Activated CD4-positive, alpha-beta T cell treated with anti-CD3 and anti-CD28 coated beads for 36 hours (primary cell): ENCODE measurements at regions of chr12 and their contacts with region 1.

Region 1: DNA sequence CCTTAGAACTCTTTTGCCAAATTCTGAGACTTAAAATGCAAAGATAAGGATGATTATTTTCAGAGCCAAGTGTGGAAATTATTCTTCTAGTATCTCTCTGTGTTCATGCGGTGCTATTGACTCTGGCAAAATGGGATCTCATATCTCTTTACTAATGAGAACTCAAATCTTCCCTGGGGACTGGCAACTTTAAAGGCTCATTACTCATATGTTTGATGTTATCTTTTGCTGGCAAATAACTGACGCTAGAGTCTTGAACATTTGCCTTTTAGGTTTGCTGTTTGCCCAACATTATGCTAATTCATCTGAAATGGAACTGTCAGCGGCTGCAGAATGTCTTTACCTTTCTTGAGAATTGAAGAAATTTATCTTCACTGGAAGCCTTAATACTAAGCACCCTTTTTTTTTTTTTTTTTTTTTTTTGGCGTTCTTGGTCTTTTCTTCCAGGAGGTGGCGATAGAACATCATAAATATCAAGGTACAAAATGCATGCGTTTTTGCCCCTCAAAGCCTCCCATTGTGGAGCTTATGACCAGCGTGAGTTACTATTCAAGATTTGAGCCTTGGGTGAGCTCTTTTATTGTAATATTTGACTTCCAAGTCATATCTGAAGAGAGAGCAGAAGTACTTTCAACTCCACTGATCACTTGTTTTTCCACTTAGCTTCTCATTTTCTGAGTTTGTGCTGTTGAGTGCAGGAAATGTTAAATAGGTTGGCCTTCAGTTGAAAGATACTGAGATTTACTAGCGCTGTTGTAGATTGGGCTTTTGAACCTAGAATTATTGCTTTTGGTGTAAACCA is 86.6 kb downstream of the CAND1 start:
- DNase-seq: peak; percentile 22
- ATAC-seq: peak; percentile 65
- H3K4me3 Mint-ChIP-seq: no peak overlapping the region
- H3K27ac Mint-ChIP-seq: no peak overlapping the region
- H3K4me1 Mint-ChIP-seq: peaks cover 29% of the 10 kb centered on the region
- H3K27me3 Mint-ChIP-seq: no peaks in the 10 kb centered on the region

Region 2: GRCh38 chr12:67241482-67241881 is 114.3 kb before region 1 on chr12:
- CTCF ChIA-PET with region 1: no interaction called
- POLR2A ChIA-PET with region 1: no interaction called
- intact Hi-C with region 1: no loop called
- DNase-seq: no peak
- ATAC-seq: no peak
- H3K4me3 Mint-ChIP-seq: no peak overlapping the region
- H3K27ac Mint-ChIP-seq: no peak overlapping the region
- H3K4me1 Mint-ChIP-seq: no peaks in the 10 kb centered on the region
- H3K27me3 Mint-ChIP-seq: peaks cover 2% of the 10 kb centered on the region

Region 3: DNA sequence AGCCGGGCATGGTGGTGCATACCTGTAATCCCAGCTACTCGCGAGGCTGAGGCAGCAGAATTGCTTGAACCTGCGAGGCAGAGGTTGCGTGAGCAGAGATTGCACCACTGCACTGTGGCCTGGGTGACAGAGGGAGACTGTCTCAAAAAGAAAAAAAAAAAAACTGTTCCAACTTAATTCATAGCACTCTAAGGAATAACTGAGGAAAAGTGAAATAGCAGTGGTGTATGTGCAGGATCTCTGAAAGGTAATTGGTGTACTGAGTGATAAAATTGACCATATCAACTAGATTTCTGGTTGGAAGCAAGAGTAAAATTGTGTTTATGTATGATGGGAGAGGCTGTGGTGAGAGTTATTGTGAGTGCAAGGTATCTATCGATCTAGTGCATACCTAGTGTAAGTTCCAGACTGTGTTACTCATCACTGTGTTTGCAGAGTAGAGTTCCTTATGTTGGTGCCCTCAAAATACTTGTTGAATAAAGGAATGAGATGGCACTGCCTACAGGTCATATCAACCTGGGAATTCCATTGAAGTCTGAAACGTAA is 80.3 kb before region 1 on chr12:
- CTCF ChIA-PET with region 1: no interaction called
- POLR2A ChIA-PET with region 1: no interaction called
- intact Hi-C with region 1: no loop called
- DNase-seq: no peak
- ATAC-seq: peak; percentile 53
- H3K4me3 Mint-ChIP-seq: no peak overlapping the region
- H3K27ac Mint-ChIP-seq: no peak overlapping the region
- H3K4me1 Mint-ChIP-seq: peaks cover 80% of the 10 kb centered on the region
- H3K27me3 Mint-ChIP-seq: no peaks in the 10 kb centered on the region

Region 4: GRCh38 chr12:68040450-68041075 is 684.8 kb after region 1 on chr12:
- CTCF ChIA-PET with region 1: interaction called, 4 read pairs
- POLR2A ChIA-PET with region 1: no interaction called
- intact Hi-C with region 1: loop called in 1 of 2 experiments (anchors 2 kb)
- DNase-seq: peak; percentile 76
- ATAC-seq: peak; percentile 69
- H3K4me3 Mint-ChIP-seq: no peak overlapping the region
- H3K27ac Mint-ChIP-seq: no peak overlapping the region
- H3K4me1 Mint-ChIP-seq: peaks cover 34% of the 10 kb centered on the region
- H3K27me3 Mint-ChIP-seq: no peaks in the 10 kb centered on the region